ENCODE measurements at regions of chr9 and their contacts with region 1.

Region 1: GRCh38 chr9:113657703-113658544 is 194.4 kb downstream of the RGS3 start:
- DNase-seq: peak; percentile 24 to 91
- H3K4me3 ChIP-seq: no peak overlapping the region
- H3K27ac ChIP-seq: no peak overlapping the region
- H3K4me1 ChIP-seq: peaks cover 5 to 13% of the 10 kb centered on the region in 2 donors
- H3K27me3 ChIP-seq: no peaks in the 10 kb centered on the region
- CTCF ChIP-seq: peak; percentile 94 to 97 (median 95)

Region 2: DNA sequence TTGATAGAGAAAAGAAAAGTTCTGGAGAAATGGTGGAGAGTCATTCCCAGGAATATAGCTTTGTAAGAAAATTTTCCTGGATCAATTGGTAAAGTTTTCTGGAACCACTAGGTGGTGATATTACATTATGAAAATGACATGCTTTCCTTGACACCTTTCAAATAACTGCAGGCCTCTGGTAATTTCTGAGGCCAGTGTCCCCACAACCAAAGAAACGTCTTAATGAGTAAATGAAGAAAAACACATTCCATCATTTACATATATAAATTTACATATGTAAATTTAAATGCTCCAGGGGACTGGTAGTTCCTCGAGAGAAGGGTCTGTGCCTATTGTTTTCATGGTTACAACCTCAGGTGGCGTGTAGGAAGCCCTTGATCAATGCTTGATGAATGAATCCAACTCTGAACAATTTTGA is 211.6 kb before region 1 on chr9:
- intact Hi-C with region 1: loop called (anchors 2 kb)
- DNase-seq: no peak
- H3K4me3 ChIP-seq: no peak overlapping the region
- H3K27ac ChIP-seq: peak overlapping the region in 1 of 2 donors; percentile 44
- H3K4me1 ChIP-seq: peaks cover 0 to 14% of the 10 kb centered on the region in 2 donors
- H3K27me3 ChIP-seq: no peaks in the 10 kb centered on the region
- CTCF ChIP-seq: peak; percentile 50 to 69 (median 67)

Region 3: GRCh38 chr9:113479174-113479621 is 178.7 kb before region 1 on chr9:
- intact Hi-C with region 1: no loop called
- DNase-seq: peak in 1 of 2 donors; percentile 61
- H3K4me3 ChIP-seq: no peak overlapping the region
- H3K27ac ChIP-seq: peak overlapping the region in 1 of 2 donors; percentile 96
- H3K4me1 ChIP-seq: peaks cover 9 to 40% of the 10 kb centered on the region in 2 donors
- H3K27me3 ChIP-seq: no peaks in the 10 kb centered on the region
- CTCF ChIP-seq: no peak

Region 4: DNA sequence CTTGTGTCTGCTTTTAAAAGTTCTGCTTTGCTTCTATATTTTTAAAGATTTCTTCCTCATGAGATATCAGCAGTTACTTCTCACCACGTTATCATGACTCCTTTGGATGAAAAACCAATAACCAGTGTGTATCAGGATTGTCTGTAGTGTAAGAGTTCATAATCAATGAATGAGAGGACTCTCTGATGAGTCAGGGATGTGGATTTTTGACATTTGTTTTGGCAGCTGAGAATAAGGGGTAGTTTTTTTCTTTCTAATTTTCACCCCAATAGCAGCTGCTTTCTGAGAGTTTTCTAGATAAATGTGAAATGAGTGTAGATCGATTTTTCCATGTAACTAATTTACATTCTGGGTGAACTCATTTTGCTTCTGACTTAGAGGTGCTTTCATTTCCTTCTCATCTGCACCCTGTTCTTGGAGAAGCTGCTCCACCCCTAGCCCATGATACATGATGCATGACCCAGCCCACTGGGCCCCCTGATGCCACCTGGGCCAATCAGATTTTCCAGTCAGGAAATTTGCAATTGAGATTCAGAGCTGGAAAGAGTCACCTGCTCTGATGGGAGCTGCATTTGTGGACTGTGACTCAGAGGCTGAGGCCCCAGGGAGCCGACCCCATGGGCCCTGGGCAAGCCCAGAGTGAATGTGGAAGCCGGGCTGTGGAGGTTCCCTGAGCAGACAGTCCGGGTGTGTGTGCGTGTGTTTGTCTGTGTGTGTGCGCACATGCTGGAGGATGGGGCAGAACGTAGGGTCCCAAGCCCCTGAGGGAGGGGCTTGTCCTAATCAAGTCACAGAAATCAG is 35.1 kb before region 1 on chr9:
- intact Hi-C with region 1: loop called (anchors 2 kb)
- DNase-seq: peak; percentile 69 to 90
- H3K4me3 ChIP-seq: no peak overlapping the region
- H3K27ac ChIP-seq: peak overlapping the region; percentile 97 to 98
- H3K4me1 ChIP-seq: peaks cover 34 to 57% of the 10 kb centered on the region in 2 donors
- H3K27me3 ChIP-seq: no peaks in the 10 kb centered on the region
- CTCF ChIP-seq: no peak

Measured in ascending aorta (tissue), 2 donors.